Right ventricle myocardium inferior (tissue), 1 donor: ENCODE measurements at regions of chr10 and their contacts with region 1.

Region 1: DNA sequence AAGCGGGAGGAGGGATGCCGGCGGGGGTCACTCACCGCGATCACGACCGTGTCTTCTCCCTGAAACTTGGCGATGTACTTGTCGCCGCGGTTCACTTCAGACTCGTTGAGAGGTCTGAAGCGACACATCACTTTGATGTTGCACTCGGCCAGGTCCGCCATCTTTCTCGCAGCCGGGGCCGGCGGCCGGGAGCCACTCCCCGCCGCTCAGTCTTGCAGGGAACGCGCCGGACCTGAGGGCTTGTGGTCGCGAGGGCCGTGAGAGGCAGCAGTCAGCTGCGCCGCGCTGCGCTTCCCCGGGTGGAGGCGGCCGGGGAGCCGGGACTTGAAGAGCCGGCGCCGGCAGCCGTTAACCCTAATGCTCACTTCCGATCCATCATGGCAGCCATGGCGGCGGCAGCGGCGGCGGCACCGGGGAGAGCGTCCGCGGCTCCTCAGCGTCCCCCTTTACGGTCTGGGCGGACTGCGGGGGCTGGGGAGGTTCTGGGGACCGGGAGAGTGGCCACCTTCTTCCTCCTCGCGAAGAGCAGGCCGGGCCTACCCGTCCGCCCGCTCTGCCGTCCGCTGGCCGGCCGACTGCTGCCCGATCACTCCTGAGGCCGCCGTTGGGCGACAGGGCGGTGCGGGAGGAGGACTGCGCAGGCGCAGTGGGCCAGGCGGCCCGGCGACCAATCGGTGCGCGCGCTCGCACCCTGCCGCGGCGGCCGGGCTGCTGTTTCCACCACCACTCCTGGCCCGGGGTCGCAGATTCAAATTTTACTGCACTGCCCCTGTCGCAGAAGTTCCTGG is at the start of gene KIF5B:
- DNase-seq: peak; percentile 96
- ATAC-seq: peak; percentile 96
- total RNA-seq, gene KIF5B: 138 TPM

Region 2: DNA sequence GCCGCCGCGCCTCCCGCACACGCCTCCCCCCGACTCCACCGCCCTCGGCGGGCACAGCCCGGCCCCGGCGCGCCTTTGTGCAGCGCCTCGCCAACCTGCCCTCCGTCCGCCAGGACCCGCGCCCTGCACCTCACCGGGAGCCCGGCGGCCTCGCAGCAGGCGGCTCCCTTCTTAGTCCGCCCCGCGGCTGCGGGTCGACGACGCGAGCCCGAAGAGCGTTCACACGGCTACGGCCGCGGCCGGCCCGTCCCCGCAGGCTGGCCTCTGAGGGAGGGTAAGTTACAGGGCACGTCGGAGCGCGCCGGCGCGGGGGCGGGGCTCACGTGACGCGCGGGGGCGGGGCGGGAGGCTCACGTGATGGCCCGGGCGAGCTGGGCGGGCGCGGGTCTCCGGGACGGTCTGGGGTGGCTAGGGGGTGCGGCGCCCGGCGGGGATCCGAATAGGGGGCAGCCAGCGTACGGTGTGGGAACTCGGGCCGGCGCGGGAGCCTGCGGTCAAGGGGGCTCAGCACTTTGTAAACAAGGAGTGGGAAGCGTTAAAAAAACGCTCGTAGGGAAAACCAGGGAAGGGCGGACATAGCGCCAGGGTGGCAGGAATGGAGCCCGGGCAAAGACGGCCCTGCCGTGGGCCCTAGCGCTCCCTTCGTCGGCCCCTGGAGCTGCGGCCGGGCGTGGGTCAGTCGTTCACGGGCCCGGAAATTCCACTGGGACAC is 127.3 kb before region 1 on chr10 and contains the start of gene ARHGAP12:
- intact Hi-C with region 1: loop called (anchors 5 kb)
- DNase-seq: peak; percentile 97
- ATAC-seq: peak; percentile 98
- total RNA-seq, gene ARHGAP12: 21.5 TPM

Region 3: GRCh38 chr10:32149252-32149955 is 93.4 kb after region 1 on chr10:
- intact Hi-C with region 1: loop called (anchors 5 kb)
- DNase-seq: no peak
- ATAC-seq: peak; percentile 94

Region 4: GRCh38 chr10:32190890-32191491 is 135.0 kb after region 1 on chr10:
- intact Hi-C with region 1: loop called (anchors 5 kb)
- DNase-seq: no peak
- ATAC-seq: no peak

Region 5: GRCh38 chr10:32346134-32346550 is 290.1 kb after region 1 on chr10:
- intact Hi-C with region 1: loop called (anchors 10 kb)
- DNase-seq: peak; percentile 98
- ATAC-seq: peak; percentile 98